ENCODE measurements at regions of chr6 and their contacts with region 1.

Region 1: GRCh38 chr6:124870611-124871459 is 91.4 kb upstream of the RNF217 start:
- DNase-seq: peak; percentile 21
- ATAC-seq: peak; percentile 40; the same call in 1 of the 2 replicates
- H3K4me3 ChIP-seq: no peak overlapping the region
- H3K27ac ChIP-seq: no peak overlapping the region
- H3K4me1 ChIP-seq: no peaks in the 10 kb centered on the region
- H3K27me3 ChIP-seq: 0 out of 2 replicates have a peak, but pooled peaks cover 7% of the 10 kb centered on the region
- CTCF ChIP-seq: peak; percentile 27 to 83 (median 76); a peak in 5 of 6 replicates
- POLR2A ChIP-seq: no peak
- RAD21 ChIP-seq: peak; percentile 92

Region 2: GRCh38 chr6:125114248-125114858 is 243.5 kb after region 1 on chr6:
- CTCF ChIA-PET with region 1: interaction called, 60 read pairs
- POLR2A ChIA-PET with region 1: interaction called, 8 read pairs
- RAD21 ChIA-PET with region 1: interaction called, 10 read pairs
- intact Hi-C with region 1: loop called (anchors 1 kb)
- DNase-seq: peak; percentile 55
- ATAC-seq: no peak
- H3K4me3 ChIP-seq: no peak overlapping the region
- H3K27ac ChIP-seq: no peak overlapping the region
- H3K4me1 ChIP-seq: no peaks in the 10 kb centered on the region
- H3K27me3 ChIP-seq: no peaks in the 10 kb centered on the region
- CTCF ChIP-seq: peak; percentile 68 to 82 (median 76)
- POLR2A ChIP-seq: no peak
- RAD21 ChIP-seq: peak; percentile 89

Region 3: DNA sequence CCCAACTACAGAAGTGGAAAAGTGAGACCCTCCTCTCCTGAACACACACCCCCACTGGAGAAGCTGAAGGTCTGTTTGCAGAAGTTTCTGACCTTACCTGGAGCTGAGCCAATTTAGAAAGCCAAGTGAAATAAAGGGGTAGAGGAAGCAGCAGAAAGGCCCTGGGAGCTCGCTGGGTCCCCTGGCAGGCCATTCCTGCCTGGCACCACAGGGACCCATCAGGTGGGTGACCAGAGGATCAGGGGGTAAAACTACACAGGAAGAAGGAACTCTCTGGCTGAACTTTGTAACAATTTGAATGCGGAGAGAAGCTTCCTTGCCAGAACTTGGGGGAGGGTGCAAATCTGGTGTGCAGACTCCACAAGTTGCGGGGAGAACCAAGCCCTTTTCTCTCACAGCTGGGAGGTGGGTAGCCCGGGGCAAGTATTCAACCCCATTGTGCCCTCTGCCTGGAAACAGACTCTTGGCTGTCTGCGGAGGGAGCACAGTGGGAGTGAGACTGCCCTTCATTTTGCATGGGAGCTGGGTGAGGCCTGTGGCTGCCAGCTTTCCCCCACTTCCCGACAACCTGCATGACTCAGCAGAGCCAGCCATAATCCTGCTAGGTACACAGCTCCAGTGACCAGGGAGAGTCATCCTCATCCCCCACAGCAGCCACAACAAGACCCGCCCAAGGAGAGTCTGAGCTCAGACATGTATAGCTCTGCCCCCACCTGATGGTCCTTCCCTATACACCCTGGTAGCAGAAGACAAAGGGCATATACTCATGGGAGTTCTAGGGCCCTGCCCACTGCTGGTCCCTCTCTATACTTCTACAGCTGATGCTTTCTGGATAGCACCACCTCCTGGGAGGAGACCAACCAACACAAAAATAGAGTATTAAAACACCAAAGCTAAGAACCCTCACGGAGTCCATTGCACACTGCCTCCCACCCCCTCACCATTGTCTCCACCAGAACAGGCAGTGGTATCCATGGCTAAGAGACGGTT is 253.2 kb after region 1 on chr6:
- CTCF ChIA-PET with region 1: interaction called, 12 read pairs
- POLR2A ChIA-PET with region 1: no interaction called
- RAD21 ChIA-PET with region 1: interaction called in 1 of 2 experiments, 3 read pairs
- intact Hi-C with region 1: no loop called
- DNase-seq: peak; percentile 8
- ATAC-seq: peak; percentile 85
- H3K4me3 ChIP-seq: 0 out of 4 replicates have a peak overlapping the region, but pooled peaks of 1 of the 2 experiments have one; percentile 8
- H3K27ac ChIP-seq: peak overlapping the region; percentile 4; the same call in 1 of the 2 replicates
- H3K4me1 ChIP-seq: peaks cover 5 to 14% of the 10 kb centered on the region in 2 experiments; a peak in 3 of 4 replicates
- H3K27me3 ChIP-seq: no peaks in the 10 kb centered on the region
- CTCF ChIP-seq: peak in 2 of 3 experiments; percentile 20 to 30; a peak in 2 of 6 replicates
- POLR2A ChIP-seq: no peak
- RAD21 ChIP-seq: peak; percentile 23; the same call in 1 of the 2 replicates

Region 4: DNA sequence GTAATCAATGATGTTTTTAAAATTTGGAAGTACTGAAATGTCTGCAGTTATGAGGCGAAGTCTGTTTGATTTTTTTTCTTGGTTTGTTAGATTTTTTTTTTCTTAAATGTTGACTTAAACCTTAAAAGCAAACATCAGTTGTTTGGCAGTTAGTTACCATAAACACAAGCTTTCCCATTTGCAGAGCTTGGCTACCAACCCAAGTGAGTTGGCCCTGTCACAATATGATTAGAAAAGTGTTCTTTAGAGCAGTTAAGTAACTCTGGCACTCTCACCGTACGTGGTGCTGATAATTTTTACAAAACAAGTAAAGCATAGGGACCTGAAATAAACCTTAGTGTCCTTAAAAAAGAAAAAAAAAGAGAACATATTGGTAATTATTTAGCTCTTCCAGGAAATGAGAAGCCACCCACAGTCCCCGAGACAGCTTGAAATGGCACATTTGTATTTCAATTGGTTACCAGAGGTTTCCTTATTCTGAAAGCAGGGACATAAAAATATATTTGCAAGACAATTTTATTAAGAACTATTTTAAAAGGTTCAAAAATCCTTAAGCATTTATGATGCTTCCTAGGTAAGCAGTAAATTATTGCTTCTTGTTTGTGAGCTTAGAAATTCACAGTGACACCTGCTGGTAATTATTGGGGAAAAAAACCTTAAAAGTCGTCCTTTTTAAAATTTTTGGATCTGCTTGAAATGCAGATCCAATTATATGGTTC is 882.5 kb after region 1 on chr6:
- CTCF ChIA-PET with region 1: interaction called, 6 read pairs
- POLR2A ChIA-PET with region 1: no interaction called
- RAD21 ChIA-PET with region 1: no interaction called
- intact Hi-C with region 1: loop called (anchors 5 kb)
- DNase-seq: peak; percentile 13
- ATAC-seq: no peak
- H3K4me3 ChIP-seq: no peak overlapping the region
- H3K27ac ChIP-seq: no peak overlapping the region
- H3K4me1 ChIP-seq: peaks cover 0 to 10% of the 10 kb centered on the region in 2 experiments; a peak in 2 of 4 replicates
- H3K27me3 ChIP-seq: peaks cover 47% of the 10 kb centered on the region
- CTCF ChIP-seq: peak; percentile 17 to 58 (median 34); a peak in 4 of 6 replicates
- POLR2A ChIP-seq: no peak
- RAD21 ChIP-seq: peak; percentile 43; the same call in 1 of the 2 replicates

Region 5: DNA sequence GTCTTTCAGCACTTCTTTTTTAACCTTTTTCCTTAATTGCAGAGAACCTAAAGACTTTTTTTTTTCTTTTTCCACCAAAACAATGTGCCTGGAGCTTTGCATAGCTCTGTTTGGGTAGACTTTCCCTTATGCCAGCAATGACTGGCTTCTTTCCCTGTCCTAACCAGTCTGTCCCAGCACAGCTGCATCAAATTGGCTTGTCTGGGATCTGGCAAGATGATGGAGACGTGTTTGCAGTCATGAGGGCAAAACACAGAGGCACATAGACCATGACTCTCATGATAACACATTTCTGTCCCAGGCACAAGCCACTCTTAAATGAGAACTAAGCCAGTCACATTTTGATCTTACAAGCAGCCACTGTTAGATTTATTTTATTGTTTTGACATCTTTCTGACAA is 895.1 kb after region 1 on chr6:
- CTCF ChIA-PET with region 1: no interaction called
- POLR2A ChIA-PET with region 1: no interaction called
- RAD21 ChIA-PET with region 1: no interaction called
- intact Hi-C with region 1: loop called (anchors 5 kb)
- DNase-seq: no peak
- ATAC-seq: no peak
- H3K4me3 ChIP-seq: no peak overlapping the region
- H3K27ac ChIP-seq: no peak overlapping the region
- H3K4me1 ChIP-seq: no peaks in the 10 kb centered on the region
- H3K27me3 ChIP-seq: peaks cover 38% of the 10 kb centered on the region
- CTCF ChIP-seq: no peak
- POLR2A ChIP-seq: no peak
- RAD21 ChIP-seq: no peak

Measured in HCT116 (cell line).